Activated CD4-positive, alpha-beta T cell treated with anti-CD3 and anti-CD28 coated beads for 36 hours (primary cell): ENCODE measurements at regions of chr11 and their contacts with region 1.

Region 1: GRCh38 chr11:86068951-86069407 is at the start of gene PICALM:
- DNase-seq: peak; percentile 99
- ATAC-seq: peak; percentile 87
- H3K4me3 Mint-ChIP-seq: peak within 1 kb of the TSS; percentile 89
- H3K27ac Mint-ChIP-seq: peak within 1 kb of the TSS; percentile 91
- H3K4me1 Mint-ChIP-seq: peaks cover 27% of the 10 kb centered on the region
- H3K27me3 Mint-ChIP-seq: no peaks in the 10 kb centered on the region
- total RNA-seq, gene PICALM: 63.8 to 88.3 TPM

Region 2: DNA sequence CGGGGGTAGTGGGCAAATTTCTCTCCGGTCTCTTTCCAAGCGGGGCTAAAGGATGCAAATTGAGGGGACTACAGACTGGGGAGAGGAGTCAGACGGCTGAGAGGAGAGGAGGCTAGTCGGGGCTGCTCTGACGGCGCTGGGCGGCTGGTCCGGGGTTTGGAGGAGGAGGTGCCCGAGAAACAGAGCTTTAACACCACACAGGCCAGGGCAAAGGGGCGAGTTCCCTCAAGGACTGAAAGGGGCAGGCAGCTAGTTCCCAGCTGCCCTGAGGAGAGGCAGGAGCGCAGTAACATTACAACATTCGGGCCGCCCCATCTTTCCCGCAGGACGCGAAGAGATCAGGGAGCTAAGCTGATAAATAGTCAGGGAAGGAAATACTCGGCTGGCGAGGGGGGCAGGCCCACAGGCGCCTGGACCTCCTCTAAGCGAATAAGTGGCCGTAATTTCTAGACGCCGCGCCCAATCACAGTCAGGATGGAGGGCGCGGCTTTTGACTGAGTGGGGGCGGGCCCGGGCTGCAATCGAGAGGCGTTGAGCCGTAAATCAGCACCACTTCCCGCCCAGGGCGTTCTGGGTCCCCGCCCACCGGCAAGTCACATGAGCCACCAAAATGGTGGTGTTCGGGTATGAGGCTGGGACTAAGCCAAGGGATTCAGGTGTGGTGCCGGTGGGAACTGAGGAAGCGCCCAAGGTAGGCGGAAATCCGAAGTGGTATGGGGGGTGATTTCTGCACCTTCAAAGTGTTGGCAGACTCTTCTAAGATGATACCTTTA is 440.8 kb before region 1 on chr11 and contains the start of gene TMEM126B:
- CTCF ChIA-PET with region 1: no interaction called
- POLR2A ChIA-PET with region 1: no interaction called
- intact Hi-C with region 1: loop called in 1 of 2 experiments (anchors 2 kb)
- DNase-seq: peak; percentile 99
- ATAC-seq: peak; percentile 95
- H3K4me3 Mint-ChIP-seq: peak within 1 kb of the TSS; percentile 98
- H3K27ac Mint-ChIP-seq: peak within 1 kb of the TSS; percentile 100
- H3K4me1 Mint-ChIP-seq: peaks cover 35% of the 10 kb centered on the region
- H3K27me3 Mint-ChIP-seq: no peaks in the 10 kb centered on the region
- total RNA-seq, gene TMEM126B: 62.7 to 74.2 TPM

Region 3: GRCh38 chr11:86041975-86042378 is 27.0 kb before region 1 on chr11:
- CTCF ChIA-PET with region 1: interaction called, 33 read pairs
- POLR2A ChIA-PET with region 1: interaction called, 9 read pairs
- intact Hi-C with region 1: loop called (anchors 1 kb)
- DNase-seq: peak; percentile 63
- ATAC-seq: peak; percentile 70
- H3K4me3 Mint-ChIP-seq: peak overlapping the region; percentile 20
- H3K27ac Mint-ChIP-seq: peak overlapping the region; percentile 68
- H3K4me1 Mint-ChIP-seq: peaks cover 71% of the 10 kb centered on the region
- H3K27me3 Mint-ChIP-seq: no peaks in the 10 kb centered on the region

Region 4: GRCh38 chr11:86099874-86100273 is 30.9 kb after region 1 on chr11:
- CTCF ChIA-PET with region 1: no interaction called
- POLR2A ChIA-PET with region 1: no interaction called
- intact Hi-C with region 1: no loop called
- DNase-seq: peak; percentile 6
- ATAC-seq: peak; percentile 78
- H3K4me3 Mint-ChIP-seq: no peak overlapping the region
- H3K27ac Mint-ChIP-seq: no peak overlapping the region
- H3K4me1 Mint-ChIP-seq: no peaks in the 10 kb centered on the region
- H3K27me3 Mint-ChIP-seq: peaks cover 6% of the 10 kb centered on the region

Region 5: DNA sequence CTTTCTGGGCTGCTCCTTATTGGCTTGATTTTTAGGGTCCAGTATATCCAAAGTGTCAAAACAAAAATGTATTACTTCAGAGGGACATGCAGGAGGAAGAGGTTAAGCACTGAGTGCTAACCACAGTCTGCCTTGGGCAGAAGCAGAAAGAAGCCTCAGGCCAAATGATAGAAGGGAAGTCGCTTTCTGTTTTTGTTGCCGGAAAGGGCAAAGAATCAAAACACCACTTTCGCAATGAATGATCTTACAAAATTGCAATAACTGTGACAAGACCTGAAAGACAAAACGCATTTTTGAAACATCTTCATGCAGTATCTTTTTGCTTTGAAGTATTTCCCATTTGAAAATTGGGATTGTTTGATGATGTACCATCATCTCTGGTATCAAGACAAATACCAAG is 70.0 kb after region 1 on chr11:
- CTCF ChIA-PET with region 1: no interaction called
- POLR2A ChIA-PET with region 1: no interaction called
- intact Hi-C with region 1: loop called in 1 of 2 experiments (anchors 2 kb)
- DNase-seq: peak; percentile 41
- ATAC-seq: peak; percentile 81
- H3K4me3 Mint-ChIP-seq: no peak overlapping the region
- H3K27ac Mint-ChIP-seq: peak overlapping the region; percentile 55
- H3K4me1 Mint-ChIP-seq: peaks cover 31% of the 10 kb centered on the region
- H3K27me3 Mint-ChIP-seq: no peaks in the 10 kb centered on the region

Region 6: DNA sequence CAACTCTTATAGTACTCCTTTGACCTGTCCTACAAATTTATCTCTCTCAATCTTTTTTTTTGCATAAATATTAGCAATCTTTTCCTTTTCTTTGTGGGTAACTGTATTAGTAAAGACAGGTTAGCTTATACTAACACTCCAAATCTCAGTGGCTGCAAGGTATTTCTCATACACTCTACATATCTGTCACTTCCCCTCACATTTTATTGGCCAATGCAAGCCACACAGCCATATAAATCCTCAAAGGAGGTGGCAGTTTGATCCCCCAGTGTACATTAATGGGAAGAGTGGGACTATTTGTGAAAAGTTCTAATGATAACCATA is 133.0 kb after region 1 on chr11:
- CTCF ChIA-PET with region 1: interaction called, 6 read pairs
- POLR2A ChIA-PET with region 1: interaction called, 3 read pairs
- intact Hi-C with region 1: loop called in 1 of 2 experiments (anchors 1 kb)
- DNase-seq: peak; percentile 39
- ATAC-seq: peak; percentile 94
- H3K4me3 Mint-ChIP-seq: no peak overlapping the region
- H3K27ac Mint-ChIP-seq: no peak overlapping the region
- H3K4me1 Mint-ChIP-seq: peaks cover 6% of the 10 kb centered on the region
- H3K27me3 Mint-ChIP-seq: peaks cover under 1% of the 10 kb centered on the region

Region 7: DNA sequence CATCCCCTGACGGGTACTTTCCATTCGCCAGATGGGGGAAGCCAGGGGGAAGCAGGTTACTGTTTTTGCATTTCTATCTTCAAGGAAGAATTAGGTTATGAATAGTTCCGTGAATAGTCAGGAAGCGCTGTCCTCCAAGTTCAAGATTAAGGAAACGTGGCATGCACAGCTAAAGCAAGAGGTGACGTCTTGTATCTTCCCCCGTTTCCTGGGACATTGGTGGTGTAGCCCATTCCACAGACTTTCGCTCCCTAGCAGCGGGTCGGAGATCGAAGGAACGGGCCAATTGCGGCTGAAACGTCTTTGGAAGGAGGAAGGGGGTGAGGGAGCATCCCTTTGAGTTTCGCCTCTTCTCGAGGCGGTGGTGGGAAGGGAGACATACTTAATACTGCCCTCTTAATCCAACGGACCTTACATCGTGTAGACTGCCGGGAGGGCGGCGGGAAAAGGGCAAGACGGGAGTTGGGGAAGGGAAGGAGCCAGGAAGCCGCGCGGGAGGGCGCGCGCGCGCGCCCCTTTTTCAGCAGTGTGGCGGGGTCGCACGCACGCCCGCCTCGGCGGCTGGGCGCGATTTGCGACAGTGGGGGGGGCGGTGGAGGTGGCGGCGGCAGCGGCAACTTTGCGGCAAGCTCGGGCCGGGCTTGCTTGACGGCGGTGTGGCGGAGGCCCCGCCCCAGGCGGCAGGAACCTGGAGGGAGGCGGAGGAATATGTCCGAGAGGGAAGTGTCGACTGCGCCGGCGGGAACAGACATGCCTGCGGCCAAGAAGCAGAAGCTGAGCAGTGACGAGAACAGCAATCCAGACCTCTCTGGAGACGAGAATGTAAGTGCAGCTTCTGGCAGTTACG is 175.8 kb after region 1 on chr11 and contains the start of gene EED:
- CTCF ChIA-PET with region 1: interaction called, 4 read pairs
- POLR2A ChIA-PET with region 1: interaction called, 6 read pairs
- intact Hi-C with region 1: loop called (anchors 1 kb)
- DNase-seq: peak; percentile 97
- ATAC-seq: peak; percentile 79
- H3K4me3 Mint-ChIP-seq: no peak within 1 kb of the TSS
- H3K27ac Mint-ChIP-seq: no peak within 1 kb of the TSS
- H3K4me1 Mint-ChIP-seq: peaks cover 42% of the 10 kb centered on the region
- H3K27me3 Mint-ChIP-seq: peaks cover 3% of the 10 kb centered on the region
- total RNA-seq, gene EED: 90.3 to 127 TPM

Region 8: DNA sequence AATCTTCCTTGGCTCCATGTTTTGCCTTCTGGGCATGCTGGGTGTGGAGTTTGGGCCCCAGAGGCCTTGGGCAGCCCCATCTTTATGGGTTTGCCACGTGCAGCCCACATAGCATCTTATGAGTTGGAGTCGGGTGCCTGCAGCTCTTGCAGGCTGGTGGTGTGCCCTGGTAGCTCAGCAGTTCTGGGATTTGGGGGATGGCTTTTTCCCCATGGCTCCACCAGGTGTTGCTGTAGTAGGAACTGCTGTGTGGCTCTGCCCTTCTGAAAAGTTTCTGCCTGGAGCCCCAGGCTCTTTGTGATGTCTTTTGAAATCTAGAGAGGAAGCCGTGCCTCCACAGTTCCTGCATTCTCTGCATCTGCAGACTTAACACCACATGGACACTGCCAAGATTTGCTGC is 192.4 kb after region 1 on chr11:
- CTCF ChIA-PET with region 1: no interaction called
- POLR2A ChIA-PET with region 1: no interaction called
- intact Hi-C with region 1: no loop called
- DNase-seq: no peak
- ATAC-seq: peak; percentile 39
- H3K4me3 Mint-ChIP-seq: no peak overlapping the region
- H3K27ac Mint-ChIP-seq: no peak overlapping the region
- H3K4me1 Mint-ChIP-seq: peaks cover 47% of the 10 kb centered on the region
- H3K27me3 Mint-ChIP-seq: no peaks in the 10 kb centered on the region

Region 9: GRCh38 chr11:86671682-86672621 is 603.0 kb after region 1 on chr11 and contains the start of gene ME3:
- CTCF ChIA-PET with region 1: no interaction called
- POLR2A ChIA-PET with region 1: no interaction called
- intact Hi-C with region 1: no loop called
- DNase-seq: peak; percentile 72
- ATAC-seq: peak; percentile 89
- H3K4me3 Mint-ChIP-seq: peak within 1 kb of the TSS; percentile 64
- H3K27ac Mint-ChIP-seq: peak within 1 kb of the TSS; percentile 71
- H3K4me1 Mint-ChIP-seq: peaks cover 24% of the 10 kb centered on the region
- H3K27me3 Mint-ChIP-seq: peaks cover 17% of the 10 kb centered on the region
- total RNA-seq, gene ME3: 4.0 to 6.0 TPM